ENCODE measurements at regions of chr5 and their contacts with region 1.

Region 1: GRCh38 chr5:39566891-39567290 is 142.1 kb upstream of the DAB2 start:
- DNase-seq: no peak
- ATAC-seq: no peak

Region 2: DNA sequence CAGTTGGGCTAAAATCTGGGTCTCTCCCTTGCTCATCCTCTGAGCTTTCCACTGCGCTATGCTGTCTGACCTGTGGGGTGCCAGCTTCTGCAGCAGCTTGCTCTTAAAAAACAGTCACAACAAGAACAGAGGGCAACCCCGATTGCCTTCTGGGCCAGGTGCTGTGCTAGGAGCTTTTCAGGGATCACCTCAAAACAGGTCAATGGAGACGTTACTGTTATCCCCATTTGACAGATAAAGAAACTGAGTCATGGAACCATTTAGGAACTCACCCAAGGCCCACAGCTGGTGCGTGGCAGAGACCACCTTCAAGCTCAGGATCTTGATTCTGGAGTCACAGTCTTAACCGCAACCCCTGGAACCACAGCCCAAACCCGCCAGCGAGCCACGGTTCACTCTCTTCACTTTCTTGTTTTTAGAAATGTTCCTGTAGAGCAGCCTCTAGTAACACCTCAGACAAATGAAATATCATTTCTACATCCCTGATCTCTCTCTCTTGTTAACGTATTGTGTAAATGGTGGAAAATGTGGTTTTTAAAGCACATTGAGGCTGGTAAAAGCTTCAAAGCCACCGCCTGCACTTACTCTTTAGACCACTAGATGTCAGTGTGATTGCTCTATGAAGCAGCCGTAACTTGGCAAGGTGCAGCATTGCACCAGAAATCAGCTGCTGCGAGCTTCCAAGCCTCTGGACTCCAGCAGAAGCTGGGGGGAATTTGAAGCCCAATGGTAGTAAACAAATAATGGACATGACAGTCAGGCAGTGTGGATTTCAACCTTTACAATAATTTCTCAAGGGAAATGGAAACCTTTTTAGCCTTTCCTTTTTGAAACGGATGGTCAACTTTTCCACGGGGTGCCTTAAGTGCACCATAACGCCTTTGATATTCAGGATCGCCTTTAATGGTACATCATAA is 349.3 kb before region 1 on chr5:
- intact Hi-C with region 1: loop called (anchors 10 kb)
- DNase-seq: peak; percentile 76
- ATAC-seq: peak; percentile 84

Region 3: DNA sequence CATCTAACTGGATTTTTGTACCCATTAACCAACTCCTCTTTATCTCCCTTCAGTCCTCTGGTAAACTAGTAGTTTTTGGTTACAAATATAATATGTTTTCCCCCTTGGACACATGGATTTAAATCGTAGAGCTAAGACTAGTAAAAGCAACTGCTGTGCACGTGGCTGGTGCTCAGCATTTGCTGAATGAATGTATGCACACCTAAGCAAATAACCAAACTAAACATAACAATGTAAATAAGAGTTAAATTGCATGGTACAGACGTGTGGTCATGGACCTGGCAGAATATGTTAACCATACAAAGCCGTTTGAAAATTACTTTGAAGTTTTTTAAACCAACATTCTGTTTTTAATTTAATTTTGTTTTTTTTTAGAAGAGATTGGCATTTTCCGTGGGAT is 282.3 kb before region 1 on chr5:
- intact Hi-C with region 1: no loop called
- DNase-seq: no peak
- ATAC-seq: no peak

Measured in Right ventricle myocardium superior (tissue), 1 donor.